Right cardiac atrium (tissue), 5 donors: ENCODE measurements at regions of chr3 and their contacts with region 1.

Region 1: DNA sequence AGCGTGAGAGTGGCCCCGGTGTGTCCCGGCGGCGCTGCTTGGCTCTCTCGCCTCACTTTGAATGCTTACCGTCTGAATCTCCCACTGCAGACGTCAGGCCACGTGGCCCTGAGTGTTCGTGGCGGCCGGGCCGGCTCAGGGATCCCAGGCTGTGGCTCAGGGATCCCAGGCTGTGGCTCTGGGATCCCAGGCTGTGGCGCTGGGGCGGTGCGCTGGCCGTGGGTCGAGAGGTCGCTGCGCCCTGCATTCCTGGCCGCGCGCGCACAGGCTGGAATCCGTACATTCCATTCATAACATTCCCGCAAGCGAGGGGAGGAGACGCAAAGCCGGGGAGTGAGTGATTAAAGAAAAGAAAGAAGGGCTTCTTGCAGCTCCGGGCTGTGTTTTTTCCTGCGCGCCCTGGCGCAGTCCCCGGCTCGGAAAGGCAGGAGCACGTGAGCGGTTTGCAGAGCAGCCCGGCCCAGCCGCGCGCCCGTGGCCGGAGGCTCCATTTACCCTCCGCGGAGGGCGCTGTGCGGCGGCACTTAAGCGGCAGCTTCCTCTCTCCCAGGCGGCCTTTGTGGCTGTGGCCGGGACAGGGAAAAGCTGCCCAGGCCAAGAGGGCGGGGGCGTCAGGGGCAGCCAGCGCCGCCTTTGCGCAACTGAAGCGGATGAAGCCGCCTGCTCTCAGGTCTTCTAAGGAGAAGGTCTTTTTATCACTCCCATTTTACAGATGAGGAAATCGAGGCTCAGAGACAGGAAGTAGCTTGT is 87.0 kb upstream of the ALDH1L1 start:
- DNase-seq: peak; percentile 86 to 94 (median 93)
- ATAC-seq: peak; percentile 79 to 82
- H3K4me3 ChIP-seq: no peak overlapping the region
- H3K27ac ChIP-seq: peak overlapping the region; percentile 69
- H3K4me1 ChIP-seq: peaks cover 9% of the 10 kb centered on the region
- H3K27me3 ChIP-seq: no peaks in the 10 kb centered on the region

Region 2: GRCh38 chr3:126159476-126159875 is 107.9 kb before region 1 on chr3:
- intact Hi-C with region 1: no loop called
- DNase-seq: no peak
- ATAC-seq: no peak
- H3K4me3 ChIP-seq: no peak overlapping the region
- H3K27ac ChIP-seq: no peak overlapping the region
- H3K4me1 ChIP-seq: peaks cover 2% of the 10 kb centered on the region
- H3K27me3 ChIP-seq: no peaks in the 10 kb centered on the region

Region 3: GRCh38 chr3:126197854-126198584 is 69.4 kb before region 1 on chr3:
- intact Hi-C with region 1: no loop called
- DNase-seq: peak; percentile 64 to 79 (median 67)
- ATAC-seq: peak; percentile 91 to 92
- H3K4me3 ChIP-seq: no peak overlapping the region
- H3K27ac ChIP-seq: no peak overlapping the region
- H3K4me1 ChIP-seq: no peaks in the 10 kb centered on the region
- H3K27me3 ChIP-seq: no peaks in the 10 kb centered on the region

Region 4: DNA sequence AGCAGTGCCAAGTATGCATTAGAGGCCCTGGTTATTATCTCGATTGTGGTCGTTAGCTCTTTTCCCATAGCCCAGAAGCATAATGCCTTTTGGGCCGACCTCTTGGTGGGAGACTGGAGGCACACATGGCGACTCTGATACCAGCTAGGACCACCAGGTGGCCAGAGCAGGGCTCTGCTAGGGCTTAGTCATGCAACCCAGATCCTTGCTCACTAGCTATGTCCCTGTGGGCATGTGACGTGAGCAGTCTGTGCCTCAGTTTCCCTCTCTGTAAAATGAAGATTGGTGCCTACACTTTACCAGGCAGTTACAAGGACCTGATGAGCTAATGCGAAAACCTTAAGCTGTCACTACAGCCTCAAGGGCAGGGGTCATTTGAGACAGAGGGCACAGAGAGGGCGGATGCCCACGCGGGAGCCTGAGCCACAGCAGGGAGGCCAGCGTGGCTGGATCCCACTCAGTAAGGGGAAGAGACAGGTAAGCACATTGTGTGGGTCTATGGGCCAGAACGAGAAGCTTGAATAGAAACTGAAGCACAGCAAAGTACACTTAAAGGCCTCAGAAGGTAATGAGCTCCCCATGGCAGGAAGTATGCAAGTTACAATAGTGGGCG is 81.0 kb after region 1 on chr3:
- intact Hi-C with region 1: loop called in 1 of 4 experiments (anchors 5 kb)
- DNase-seq: peak in 2 of 3 donors; percentile 20 to 41
- ATAC-seq: no peak
- H3K4me3 ChIP-seq: no peak overlapping the region
- H3K27ac ChIP-seq: no peak overlapping the region
- H3K4me1 ChIP-seq: peaks cover 21% of the 10 kb centered on the region
- H3K27me3 ChIP-seq: no peaks in the 10 kb centered on the region

Region 5: DNA sequence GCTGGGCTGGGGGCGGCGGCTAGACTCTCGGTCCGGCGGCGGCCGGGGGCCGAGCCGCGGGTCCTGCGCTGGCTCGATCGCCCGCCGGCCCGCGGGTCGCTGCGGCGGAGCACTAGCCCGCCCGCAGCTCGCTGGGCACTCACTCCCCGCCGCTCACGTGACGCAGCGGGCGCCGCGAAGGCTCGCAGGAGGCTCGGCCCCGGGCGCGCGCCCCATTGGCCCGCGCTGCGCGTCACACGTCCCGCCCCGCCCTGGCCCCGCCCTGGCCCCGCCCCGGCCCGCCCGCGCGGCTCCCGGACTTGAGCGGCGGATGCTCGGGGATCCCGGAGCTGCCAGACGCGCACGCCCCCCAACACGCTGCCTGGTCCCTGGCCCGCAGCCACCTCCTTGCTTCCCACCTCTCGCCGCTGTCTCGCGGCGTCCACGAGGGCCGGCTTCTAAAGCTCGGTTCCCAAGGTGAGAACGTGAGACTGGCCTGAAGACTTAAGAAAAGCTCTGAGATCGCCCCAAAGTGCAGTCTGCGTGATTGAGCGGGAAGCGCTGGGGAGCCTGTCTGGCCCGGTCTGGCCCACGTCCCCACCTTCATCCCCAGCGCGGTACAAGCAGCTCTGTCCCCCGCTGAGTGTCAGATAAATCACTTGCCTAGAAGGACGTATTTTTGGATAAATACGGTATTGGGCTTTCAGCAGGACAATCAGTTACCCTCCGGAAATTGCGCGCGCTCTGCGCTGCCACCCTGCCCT is 90.1 kb after region 1 on chr3 and contains the start of gene KLF15:
- intact Hi-C with region 1: loop called in 3 of 4 experiments (anchors 2 to 5 kb)
- DNase-seq: peak; percentile 90 to 96 (median 96)
- ATAC-seq: peak; percentile 80 to 83
- H3K4me3 ChIP-seq: peak within 1 kb of the TSS; percentile 86
- H3K27ac ChIP-seq: peak within 1 kb of the TSS; percentile 95
- H3K4me1 ChIP-seq: peaks cover 8% of the 10 kb centered on the region
- H3K27me3 ChIP-seq: no peaks in the 10 kb centered on the region
- total RNA-seq, gene KLF15: 24.0 to 38.4 (median 31.1) TPM

Region 6: DNA sequence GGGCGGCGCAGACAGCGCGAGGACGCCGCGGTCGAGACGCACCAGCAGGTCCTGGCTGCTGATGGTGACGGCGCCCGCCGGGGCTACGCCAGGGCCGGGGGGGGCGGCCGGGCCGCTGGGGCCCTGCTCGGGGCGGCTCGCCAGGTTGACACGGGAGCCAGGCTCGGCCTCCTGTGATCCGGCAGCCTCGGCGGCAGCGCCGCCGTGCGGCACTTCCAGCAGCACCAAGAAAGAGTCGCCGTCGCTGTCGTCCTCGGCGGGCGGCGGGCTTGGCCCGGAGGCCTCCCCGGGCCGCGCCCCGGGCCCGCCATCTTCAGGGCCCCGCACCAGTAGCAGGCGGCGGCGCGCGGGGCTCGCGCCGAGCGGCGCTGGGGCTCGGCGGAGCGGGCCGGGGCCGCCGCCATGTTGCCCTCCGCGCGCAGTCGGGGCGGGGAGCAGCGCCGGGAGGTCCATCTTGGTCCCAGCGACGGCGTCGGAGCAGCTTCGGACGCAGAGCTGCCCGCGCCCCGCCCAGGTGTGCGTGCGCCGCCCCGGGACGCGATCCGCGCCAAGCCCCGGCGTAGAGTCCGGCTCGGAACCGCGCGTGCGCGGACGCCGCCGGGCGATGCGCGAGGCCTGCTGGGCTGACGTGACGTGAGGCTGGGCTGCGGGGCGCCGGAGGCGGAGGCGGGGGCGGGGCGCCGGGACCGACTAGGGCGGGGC is 208.2 kb after region 1 on chr3 and contains the start of gene ZXDC:
- intact Hi-C with region 1: loop called in 1 of 4 experiments (anchors 10 kb)
- DNase-seq: peak; percentile 96 to 99 (median 99)
- ATAC-seq: peak; percentile 88 to 92
- H3K4me3 ChIP-seq: peak within 1 kb of the TSS; percentile 70
- H3K27ac ChIP-seq: peak within 1 kb of the TSS; percentile 91
- H3K4me1 ChIP-seq: peaks cover 20% of the 10 kb centered on the region
- H3K27me3 ChIP-seq: no peaks in the 10 kb centered on the region
- total RNA-seq, gene ZXDC: 17.8 to 21.6 (median 19.7) TPM